Activated CD4-positive, alpha-beta T cell treated with anti-CD3 and anti-CD28 coated beads, Interleukin-2, amount 10 ng/mL, durations not matched to agents 24 days and 14 days (primary cell): ENCODE measurements at regions of chr4 and their contacts with region 1.

Region 1: DNA sequence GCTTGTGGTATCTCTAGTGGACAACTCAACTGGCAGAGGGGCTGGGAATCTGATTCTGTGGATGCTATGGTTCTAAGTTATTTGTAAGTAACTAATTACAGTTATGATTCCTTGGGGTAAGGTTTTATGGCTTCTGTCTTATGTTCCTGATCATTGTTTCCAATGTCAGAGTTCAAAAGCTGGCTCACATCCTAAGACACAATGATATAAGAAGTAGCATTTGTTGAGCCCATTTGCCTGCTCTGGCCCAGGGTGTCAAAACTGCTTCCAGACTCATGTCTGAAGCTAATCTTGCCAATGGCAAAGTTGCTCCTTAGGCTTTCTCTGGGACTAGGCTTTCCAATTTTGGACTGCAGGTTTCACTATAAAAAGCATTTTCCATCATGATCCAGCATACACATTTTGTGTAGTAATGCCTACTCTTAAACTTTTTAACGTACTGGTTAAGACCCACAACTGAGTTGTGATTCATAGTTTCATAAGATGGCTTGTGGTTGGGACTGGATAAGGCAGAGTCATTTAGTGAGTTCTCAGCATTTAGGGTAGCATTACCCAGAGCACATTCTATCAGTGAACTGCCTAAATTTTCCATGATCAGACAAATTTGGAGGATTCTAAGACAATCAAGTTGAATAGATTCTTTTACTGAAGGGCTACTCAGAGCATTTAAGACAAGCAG is 50.0 kb downstream of the CCNI start:
- DNase-seq: peak; percentile 71
- H3K4me3 Mint-ChIP-seq: peak overlapping the region; percentile 51
- H3K27ac Mint-ChIP-seq: peak overlapping the region; percentile 50
- H3K4me1 Mint-ChIP-seq: peaks cover 34% of the 10 kb centered on the region
- H3K27me3 Mint-ChIP-seq: peaks cover 6% of the 10 kb centered on the region

Region 2: GRCh38 chr4:76301068-76301774 is 724.6 kb before region 1 on chr4:
- intact Hi-C with region 1: loop called (anchors 2 kb)
- DNase-seq: peak; percentile 82
- H3K4me3 Mint-ChIP-seq: no peak overlapping the region
- H3K27ac Mint-ChIP-seq: peak overlapping the region; percentile 66
- H3K4me1 Mint-ChIP-seq: peaks cover 39% of the 10 kb centered on the region
- H3K27me3 Mint-ChIP-seq: peaks cover 9% of the 10 kb centered on the region

Region 3: GRCh38 chr4:76570141-76570973 is 455.4 kb before region 1 on chr4:
- intact Hi-C with region 1: no loop called
- DNase-seq: no peak
- H3K4me3 Mint-ChIP-seq: no peak overlapping the region
- H3K27ac Mint-ChIP-seq: no peak overlapping the region
- H3K4me1 Mint-ChIP-seq: no peaks in the 10 kb centered on the region
- H3K27me3 Mint-ChIP-seq: peaks cover 32% of the 10 kb centered on the region

Region 4: GRCh38 chr4:76949276-76950051 is 76.3 kb before region 1 on chr4 and contains the start of gene SEPTIN11:
- intact Hi-C with region 1: loop called (anchors 1 kb)
- DNase-seq: peak; percentile 91
- H3K4me3 Mint-ChIP-seq: peak within 1 kb of the TSS; percentile 87
- H3K27ac Mint-ChIP-seq: peak within 1 kb of the TSS; percentile 62
- H3K4me1 Mint-ChIP-seq: peaks cover 17% of the 10 kb centered on the region
- H3K27me3 Mint-ChIP-seq: peaks cover 67% of the 10 kb centered on the region
- total RNA-seq, gene SEPTIN11: 15.4 and 17.0 TPM in 2 replicates

Region 5: GRCh38 chr4:76960014-76960413 is 65.8 kb before region 1 on chr4:
- intact Hi-C with region 1: loop called (anchors 1 kb)
- DNase-seq: peak; percentile 63
- H3K4me3 Mint-ChIP-seq: no peak overlapping the region
- H3K27ac Mint-ChIP-seq: no peak overlapping the region
- H3K4me1 Mint-ChIP-seq: peaks cover 11% of the 10 kb centered on the region
- H3K27me3 Mint-ChIP-seq: peaks cover 57% of the 10 kb centered on the region

Region 6: GRCh38 chr4:76993787-76994641 is 31.8 kb before region 1 on chr4:
- intact Hi-C with region 1: loop called (anchors 1 kb)
- DNase-seq: peak; percentile 87
- H3K4me3 Mint-ChIP-seq: peak overlapping the region; percentile 67
- H3K27ac Mint-ChIP-seq: peak overlapping the region; percentile 79
- H3K4me1 Mint-ChIP-seq: peaks cover 40% of the 10 kb centered on the region
- H3K27me3 Mint-ChIP-seq: peaks cover 26% of the 10 kb centered on the region

Region 7: DNA sequence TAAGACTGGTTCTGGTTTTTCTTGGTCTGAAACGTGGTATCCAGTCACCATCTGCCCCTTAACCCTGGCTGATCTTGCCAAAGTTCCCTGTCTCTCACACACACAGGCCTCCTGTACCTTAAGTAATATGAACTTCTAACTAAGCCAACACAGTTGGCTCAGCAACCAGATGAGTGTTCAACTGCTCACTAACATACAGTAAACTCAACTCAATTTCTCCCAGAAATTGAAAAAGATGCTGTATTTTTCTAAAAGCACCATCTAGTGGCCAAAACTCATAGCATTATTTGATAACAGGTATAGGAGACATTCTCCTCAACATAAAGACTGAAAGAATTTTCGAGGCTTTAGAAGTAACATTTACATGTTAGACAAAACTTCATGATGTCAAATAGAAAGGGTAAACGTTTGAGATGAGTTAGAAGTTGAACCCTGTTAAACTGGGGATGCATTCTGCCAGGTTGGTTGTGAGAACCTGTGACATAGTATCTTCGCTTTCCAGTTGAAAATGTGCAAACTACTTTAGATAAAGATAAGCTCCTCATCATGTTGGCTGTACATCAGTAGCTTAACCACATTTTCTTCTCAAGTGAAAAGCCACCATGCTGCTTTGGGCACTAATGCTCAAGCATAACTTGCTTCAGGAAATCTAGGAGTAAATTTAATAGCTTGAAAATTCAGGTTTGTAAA is 18.8 kb after region 1 on chr4:
- intact Hi-C with region 1: loop called (anchors 2 kb)
- DNase-seq: peak; percentile 59
- H3K4me3 Mint-ChIP-seq: no peak overlapping the region
- H3K27ac Mint-ChIP-seq: no peak overlapping the region
- H3K4me1 Mint-ChIP-seq: peaks cover 2% of the 10 kb centered on the region
- H3K27me3 Mint-ChIP-seq: no peaks in the 10 kb centered on the region

Region 8: GRCh38 chr4:77852892-77853495 is 827.2 kb after region 1 on chr4:
- intact Hi-C with region 1: loop called (anchors 5 kb)
- DNase-seq: peak; percentile 93
- H3K4me3 Mint-ChIP-seq: peak overlapping the region; percentile 85
- H3K27ac Mint-ChIP-seq: peak overlapping the region; percentile 99
- H3K4me1 Mint-ChIP-seq: peaks cover 51% of the 10 kb centered on the region
- H3K27me3 Mint-ChIP-seq: no peaks in the 10 kb centered on the region